ENCODE measurements at regions of chr1 and their contacts with region 1.

Region 1: DNA sequence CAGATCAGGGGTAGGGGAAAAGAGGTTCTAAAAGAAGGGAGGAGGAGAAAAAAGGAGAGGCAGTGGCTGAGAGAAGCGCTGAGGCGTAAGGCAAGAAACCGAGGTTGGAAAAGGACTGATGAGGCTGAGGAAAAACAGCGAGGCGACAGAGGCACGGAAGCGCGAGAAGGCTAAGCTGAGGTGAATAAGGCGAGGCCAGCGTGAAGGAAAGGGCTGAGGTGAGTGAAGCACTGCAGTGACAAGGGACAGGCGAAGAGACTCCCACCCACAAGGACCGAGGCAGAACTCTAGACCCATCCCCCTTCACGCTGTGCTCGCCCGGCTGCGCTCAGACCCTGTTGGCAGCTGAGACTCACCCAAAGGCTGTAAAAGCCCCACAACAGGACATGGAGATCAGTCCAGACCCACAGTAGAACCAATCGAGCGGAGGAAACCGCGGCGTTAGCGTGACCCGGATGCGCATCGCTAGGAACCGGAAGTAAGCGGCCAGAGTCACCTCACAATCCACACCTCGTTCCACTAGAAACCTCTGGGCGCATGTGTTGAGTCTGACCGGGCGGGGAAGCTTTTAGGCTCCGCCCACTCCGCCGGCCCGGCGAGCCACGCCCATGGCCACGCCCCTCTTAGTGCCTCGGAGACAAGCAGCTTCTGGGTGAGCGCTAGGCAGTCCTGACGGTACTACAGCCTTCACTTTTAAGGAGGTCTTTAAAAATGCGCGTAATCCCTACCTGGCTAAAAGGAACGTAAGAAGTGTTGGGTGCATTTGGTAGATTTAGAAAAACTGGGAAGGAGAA is at the start of gene EYA3:
- DNase-seq: peak; percentile 98
- H3K4me3 ChIP-seq: peak within 1 kb of the TSS; percentile 74 to 85 (median 75)
- H3K27ac ChIP-seq: peak within 1 kb of the TSS; percentile 85
- H3K4me1 ChIP-seq: peaks cover 11% of the 10 kb centered on the region
- H3K27me3 ChIP-seq: no peaks in the 10 kb centered on the region
- CTCF ChIP-seq: no peak
- total RNA-seq, gene EYA3: 12.3 to 21.9 TPM

Region 2: GRCh38 chr1:27372808-27373690 is 715.3 kb before region 1 on chr1:
- CTCF ChIA-PET with region 1: no interaction called
- dilution Hi-C with region 1: no loop called
- in situ Hi-C with region 1: no loop called
- intact Hi-C with region 1: no loop called
- DNase-seq: no peak
- H3K4me3 ChIP-seq: no peak overlapping the region
- H3K27ac ChIP-seq: no peak overlapping the region
- H3K4me1 ChIP-seq: no peaks in the 10 kb centered on the region
- H3K27me3 ChIP-seq: no peaks in the 10 kb centered on the region
- CTCF ChIP-seq: peak in 1 of 2 donors; percentile 20

Region 3: DNA sequence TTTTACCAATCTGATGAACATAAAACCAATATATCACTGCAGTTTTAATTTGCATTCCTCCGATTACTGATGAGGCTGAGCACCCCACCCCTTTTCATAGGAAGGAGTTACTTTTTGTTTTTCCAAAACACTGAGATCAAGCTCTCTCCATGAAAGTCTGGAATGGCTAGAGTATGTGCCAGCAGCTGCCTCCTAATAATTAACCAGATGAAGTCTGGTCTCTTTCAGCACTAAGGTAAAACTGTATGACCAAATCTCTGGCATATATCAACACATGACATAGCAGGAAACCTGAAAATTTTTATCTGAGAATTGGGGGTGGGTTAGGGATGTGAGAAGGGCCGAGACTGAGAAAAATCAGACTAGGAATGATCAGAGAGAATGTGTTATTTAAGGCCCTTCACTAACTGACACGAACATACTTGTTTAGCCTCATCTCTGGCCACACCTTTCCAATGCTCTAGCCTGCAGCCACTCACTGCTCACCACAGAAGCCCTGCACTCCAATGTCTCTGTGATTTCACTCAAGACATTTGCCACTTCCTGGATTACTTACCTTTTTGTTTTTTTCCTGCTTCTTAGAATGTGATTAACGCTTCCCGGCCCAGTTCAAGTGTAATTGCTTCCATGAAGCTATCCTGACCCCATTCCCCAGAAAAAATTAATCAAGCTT is 633.1 kb before region 1 on chr1:
- CTCF ChIA-PET with region 1: no interaction called
- dilution Hi-C with region 1: no loop called
- in situ Hi-C with region 1: no loop called
- intact Hi-C with region 1: no loop called
- DNase-seq: peak; percentile 72
- H3K4me3 ChIP-seq: no peak overlapping the region
- H3K27ac ChIP-seq: peak overlapping the region; percentile 42
- H3K4me1 ChIP-seq: peaks cover 13% of the 10 kb centered on the region
- H3K27me3 ChIP-seq: no peaks in the 10 kb centered on the region
- CTCF ChIP-seq: no peak

Region 4: DNA sequence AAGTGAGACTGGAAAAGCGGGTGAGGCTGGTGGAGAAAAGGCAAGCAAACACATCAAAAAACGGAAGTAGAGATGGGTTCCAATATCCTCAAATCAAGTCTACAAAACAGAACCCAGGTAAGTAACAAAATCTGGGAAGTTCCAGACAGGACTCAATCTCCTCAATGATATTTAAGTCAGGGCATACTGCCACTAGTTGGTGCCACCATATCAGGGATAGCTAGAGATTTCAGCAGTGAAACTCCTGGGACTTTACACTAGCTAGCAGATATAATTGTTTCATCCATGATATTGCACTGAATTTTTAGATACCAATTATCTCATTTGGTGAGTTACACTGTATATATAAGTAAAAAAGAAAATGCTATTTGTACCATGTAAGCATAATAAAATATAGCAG is 51.9 kb before region 1 on chr1:
- CTCF ChIA-PET with region 1: no interaction called
- dilution Hi-C with region 1: no loop called
- in situ Hi-C with region 1: no loop called
- intact Hi-C with region 1: loop called (anchors 2 kb)
- DNase-seq: no peak
- H3K4me3 ChIP-seq: no peak overlapping the region
- H3K27ac ChIP-seq: no peak overlapping the region
- H3K4me1 ChIP-seq: no peaks in the 10 kb centered on the region
- H3K27me3 ChIP-seq: no peaks in the 10 kb centered on the region
- CTCF ChIP-seq: peak in 1 of 2 donors; percentile 38

Region 5: DNA sequence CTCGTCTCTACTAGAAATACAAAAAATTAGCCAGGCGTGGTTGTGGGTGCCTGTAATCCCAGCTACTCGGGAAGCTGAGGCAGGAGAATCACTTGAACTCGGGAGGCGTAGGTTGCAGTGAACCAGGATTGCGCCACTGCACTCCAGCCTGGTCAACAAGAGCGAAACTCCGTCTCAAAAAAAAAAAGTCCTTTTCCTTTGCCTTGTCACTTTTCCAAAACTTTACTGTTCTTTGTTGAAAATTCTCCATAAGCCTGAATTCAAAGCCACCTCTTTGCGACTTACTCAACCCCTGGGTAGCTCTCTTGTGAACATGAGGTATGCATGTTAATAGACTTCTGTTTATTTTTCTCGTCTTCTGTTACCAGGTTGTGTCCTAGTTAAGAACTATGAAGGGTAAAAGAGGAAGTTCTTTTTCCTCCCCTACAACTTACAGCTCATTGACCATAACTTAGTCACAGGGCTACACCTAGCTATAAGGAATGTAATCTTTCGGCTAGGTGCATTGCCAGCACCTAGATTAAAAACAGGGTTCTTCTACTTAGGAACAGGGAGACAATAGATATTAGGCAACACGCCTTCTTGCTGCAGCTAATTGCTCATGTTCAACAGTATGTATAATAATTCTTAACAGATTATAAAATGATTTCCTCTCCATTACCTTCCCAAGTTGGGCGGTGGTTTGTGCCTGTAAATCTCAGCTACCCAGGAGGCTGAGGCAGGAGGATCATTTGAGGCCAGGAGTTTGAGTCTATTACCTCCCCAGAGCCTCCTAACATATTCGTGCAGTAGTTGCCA is 47.2 kb after region 1 on chr1:
- CTCF ChIA-PET with region 1: no interaction called
- dilution Hi-C with region 1: no loop called
- in situ Hi-C with region 1: no loop called
- intact Hi-C with region 1: loop called (anchors 1 kb)
- DNase-seq: peak; percentile 89
- H3K4me3 ChIP-seq: no peak overlapping the region
- H3K27ac ChIP-seq: peak overlapping the region; percentile 61
- H3K4me1 ChIP-seq: peaks cover 21% of the 10 kb centered on the region
- H3K27me3 ChIP-seq: no peaks in the 10 kb centered on the region
- CTCF ChIP-seq: no peak